ENCODE measurements at regions of chr11 and their contacts with region 1.

Region 1: GRCh38 chr11:18368221-18368620 is 26.1 kb upstream of the LDHA start:
- DNase-seq: no peak
- ATAC-seq: no peak
- H3K4me3 ChIP-seq: no peak overlapping the region
- H3K27ac ChIP-seq: no peak overlapping the region
- H3K4me1 ChIP-seq: no peaks in the 10 kb centered on the region
- H3K27me3 ChIP-seq: no peaks in the 10 kb centered on the region
- CTCF ChIP-seq: no peak
- POLR2A ChIP-seq: no peak

Region 2: GRCh38 chr11:18329196-18329870 is 38.9 kb before region 1 on chr11:
- intact Hi-C with region 1: no loop called
- DNase-seq: no peak
- ATAC-seq: no peak
- H3K4me3 ChIP-seq: no peak overlapping the region
- H3K27ac ChIP-seq: no peak overlapping the region
- H3K4me1 ChIP-seq: peaks cover 0 to 44% (median 15%) of the 10 kb centered on the region in 12 donors
- H3K27me3 ChIP-seq: no peaks in the 10 kb centered on the region
- CTCF ChIP-seq: no peak
- POLR2A ChIP-seq: no peak

Region 3: DNA sequence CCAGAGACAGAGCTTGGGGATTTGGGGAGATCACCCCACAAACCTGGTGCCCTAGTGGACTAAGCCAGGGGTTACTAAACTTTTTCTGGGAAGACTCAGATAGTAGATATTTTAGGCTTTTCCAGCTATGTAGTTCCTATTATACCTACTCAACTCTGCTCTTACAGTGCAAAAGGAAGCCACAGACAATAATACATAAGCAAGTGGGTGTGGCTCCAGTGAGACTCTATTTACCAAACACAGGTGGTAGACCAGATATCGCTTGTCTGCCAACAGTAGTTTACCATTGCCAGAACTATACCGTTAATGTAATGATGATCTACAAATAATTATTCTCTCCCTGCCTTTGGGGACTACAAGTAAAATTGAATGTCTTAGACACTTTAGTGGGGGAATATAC is 50.8 kb after region 1 on chr11:
- intact Hi-C with region 1: loop called in 1 of 10 experiments (anchors 10 kb)
- DNase-seq: no peak
- ATAC-seq: no peak
- H3K4me3 ChIP-seq: no peak overlapping the region
- H3K27ac ChIP-seq: no peak overlapping the region
- H3K4me1 ChIP-seq: no peaks in the 10 kb centered on the region
- H3K27me3 ChIP-seq: no peaks in the 10 kb centered on the region
- CTCF ChIP-seq: no peak
- POLR2A ChIP-seq: no peak

Measured in heart left ventricle (tissue), 16 donors.